HepG2 (cell line): ENCODE measurements at regions of chr12 and their contacts with region 1.

Region 1: GRCh38 chr12:120292661-120293531 is at the start of gene RNU4-1:
- DNase-seq: peak; percentile 93
- ATAC-seq: peak; percentile 45
- H3K4me3 ChIP-seq: peak within 1 kb of the TSS; percentile 59 to 74 (median 71)
- H3K27ac ChIP-seq: peak within 1 kb of the TSS; percentile 100
- H3K4me1 ChIP-seq: peaks cover 26% of the 10 kb centered on the region; the same call in 1 of the 2 replicates
- H3K27me3 ChIP-seq: no peaks in the 10 kb centered on the region; a peak in 1 of 5 replicates
- CTCF ChIP-seq: no peak
- EP300 ChIP-seq: peak in 1 of 2 experiments; percentile 63; a peak in 2 of 4 replicates
- POLR2A ChIP-seq: peak; percentile 99 to 100
- RAD21 ChIP-seq: peak; percentile 22; the same call in 1 of the 2 replicates
- total RNA-seq, gene RNU4-1: 623 and 7,407 TPM in 2 replicates

Region 2: DNA sequence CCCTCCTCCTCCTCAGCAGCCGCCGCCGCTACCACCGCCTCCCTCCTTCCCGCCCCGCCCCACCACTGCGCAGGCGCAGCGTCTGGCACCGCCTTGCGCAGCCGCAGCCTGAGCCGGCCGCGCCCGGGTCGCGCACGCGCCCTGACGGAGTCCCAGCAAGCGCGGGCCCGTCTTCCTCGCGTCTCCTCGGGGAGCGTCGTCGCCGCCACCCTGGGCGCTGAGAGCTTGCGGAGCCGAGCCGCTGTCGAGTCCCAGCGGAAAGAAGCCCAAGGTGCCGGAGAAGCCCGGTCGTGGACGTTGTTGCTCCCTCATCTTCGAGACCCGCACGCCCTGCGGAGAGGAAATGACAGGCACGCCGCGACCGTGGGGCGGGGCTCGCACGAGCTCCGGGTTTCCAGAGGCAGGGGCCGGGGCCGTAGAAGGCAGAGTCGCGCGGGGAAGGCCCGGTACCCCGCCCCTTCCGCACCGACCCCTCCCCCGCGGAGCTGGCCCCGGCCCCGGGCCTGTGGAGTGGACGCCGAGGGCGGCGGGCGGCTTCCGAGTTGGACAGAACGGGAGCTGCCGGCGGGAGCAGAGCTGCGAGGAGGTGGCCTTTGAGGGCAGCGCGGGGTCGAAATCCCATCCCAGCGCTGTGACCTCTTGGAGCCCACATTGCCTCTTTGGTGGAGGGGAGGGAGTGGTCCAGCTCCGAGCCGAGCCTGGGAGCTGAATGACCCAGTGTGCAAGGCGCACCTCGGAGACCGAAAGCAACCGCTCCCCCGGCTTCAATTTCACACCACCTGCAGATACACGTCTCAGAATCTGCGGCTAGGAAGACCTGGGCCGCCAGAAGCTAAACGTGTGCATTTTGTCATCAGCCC is 175.9 kb before region 1 on chr12:
- CTCF ChIA-PET with region 1: no interaction called
- POLR2A ChIA-PET with region 1: interaction called, 26 read pairs
- in situ Hi-C with region 1: no loop called
- intact Hi-C with region 1: no loop called
- DNase-seq: peak; percentile 86
- ATAC-seq: peak; percentile 76
- H3K4me3 ChIP-seq: peak overlapping the region; percentile 70 to 99 (median 93)
- H3K27ac ChIP-seq: peak overlapping the region; percentile 92
- H3K4me1 ChIP-seq: peaks cover 68% of the 10 kb centered on the region
- H3K27me3 ChIP-seq: no peaks in the 10 kb centered on the region; a peak in 1 of 5 replicates
- CTCF ChIP-seq: no peak
- EP300 ChIP-seq: peak in 1 of 2 experiments; percentile 46; a peak in 1 of 4 replicates
- POLR2A ChIP-seq: peak in 1 of 2 experiments; percentile 93; a peak in 2 of 4 replicates
- RAD21 ChIP-seq: no peak; the same call in 1 of the 2 replicates

Region 3: DNA sequence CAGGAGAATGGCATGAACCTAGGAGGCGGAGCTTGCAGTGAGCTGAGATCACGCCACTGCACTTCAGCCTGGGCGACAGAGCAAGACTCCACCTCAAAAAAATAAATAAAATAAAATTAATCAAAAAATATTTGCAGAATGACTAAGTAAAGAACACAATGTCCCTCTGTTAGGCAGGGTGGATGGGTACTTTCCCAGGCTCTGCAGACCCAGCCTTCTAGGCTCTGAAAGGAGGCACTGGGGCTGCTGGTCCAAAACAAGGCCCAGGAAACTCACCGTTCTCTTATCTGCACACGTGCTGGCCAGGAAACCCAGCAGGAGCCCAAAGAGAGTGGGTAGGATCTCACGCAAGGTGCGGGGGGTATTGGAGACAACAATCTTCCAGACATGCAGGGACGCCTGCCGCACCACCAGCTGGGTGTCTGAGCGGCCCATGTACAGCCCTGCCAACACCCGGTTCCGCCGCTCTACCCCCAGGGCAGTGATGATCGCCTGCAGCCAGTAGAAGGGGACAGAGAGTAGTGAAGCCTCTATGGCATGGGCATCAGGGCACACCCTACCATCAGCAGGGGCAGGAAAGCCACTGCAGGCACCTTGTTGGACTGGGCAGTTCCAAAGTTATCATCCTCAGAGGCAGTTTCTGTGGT is 150.5 kb before region 1 on chr12:
- CTCF ChIA-PET with region 1: no interaction called
- POLR2A ChIA-PET with region 1: no interaction called
- in situ Hi-C with region 1: no loop called
- intact Hi-C with region 1: no loop called
- DNase-seq: no peak
- ATAC-seq: no peak
- H3K4me3 ChIP-seq: no peak overlapping the region
- H3K27ac ChIP-seq: no peak overlapping the region
- H3K4me1 ChIP-seq: 0 out of 2 replicates have a peak, but pooled peaks cover 5% of the 10 kb centered on the region
- H3K27me3 ChIP-seq: no peaks in the 10 kb centered on the region
- CTCF ChIP-seq: no peak
- EP300 ChIP-seq: no peak
- POLR2A ChIP-seq: no peak
- RAD21 ChIP-seq: no peak

Region 4: DNA sequence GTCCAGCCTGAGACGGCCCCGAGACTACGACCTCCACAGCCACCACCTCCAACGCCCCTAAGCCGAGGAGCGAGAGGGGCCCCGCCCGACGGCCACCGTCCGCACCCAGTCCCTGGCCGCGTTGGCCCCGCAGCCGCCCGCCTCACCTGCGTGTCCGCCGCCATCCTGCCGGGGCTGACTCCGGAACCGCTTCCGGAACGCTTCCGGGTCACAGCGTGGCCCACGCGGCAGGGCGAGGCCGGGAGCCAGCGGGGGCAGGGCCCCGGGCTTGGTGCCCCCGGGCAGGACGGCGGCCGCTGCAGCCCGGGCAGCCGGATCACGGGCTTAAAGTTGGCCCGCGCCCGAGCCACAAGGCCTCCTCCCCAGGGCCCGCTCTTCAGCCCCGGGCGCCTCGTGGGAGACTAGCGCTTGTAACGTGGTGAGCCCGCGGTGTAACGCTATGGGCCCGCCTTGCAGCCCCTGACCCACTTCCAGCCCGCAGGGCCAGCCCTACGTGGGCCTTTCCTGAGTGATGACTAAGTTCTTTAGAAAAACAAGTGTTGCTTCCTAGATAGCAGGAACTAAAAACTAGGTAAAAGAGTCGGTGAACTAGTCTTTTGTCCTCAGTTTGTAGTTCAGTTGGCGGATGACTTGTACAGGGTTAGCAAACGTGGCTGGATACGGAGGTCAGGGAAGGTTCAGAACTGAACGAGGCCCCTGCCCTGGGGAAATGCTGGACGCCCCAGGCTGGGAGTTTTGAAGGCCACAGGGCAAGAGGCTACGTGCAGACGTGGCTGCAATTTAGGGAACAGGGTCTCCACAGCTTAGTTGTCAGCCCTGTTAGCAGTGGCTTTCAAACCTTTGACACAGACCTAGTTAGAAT is 98.1 kb before region 1 on chr12 and contains the start of gene GCN1:
- CTCF ChIA-PET with region 1: no interaction called
- POLR2A ChIA-PET with region 1: interaction called, 138 read pairs
- in situ Hi-C with region 1: no loop called
- intact Hi-C with region 1: no loop called
- DNase-seq: peak; percentile 78
- ATAC-seq: peak; percentile 84
- H3K4me3 ChIP-seq: peak within 1 kb of the TSS; percentile 80 to 88 (median 82)
- H3K27ac ChIP-seq: peak within 1 kb of the TSS; percentile 94
- H3K4me1 ChIP-seq: peaks cover 70% of the 10 kb centered on the region
- H3K27me3 ChIP-seq: no peaks in the 10 kb centered on the region; a peak in 1 of 5 replicates
- CTCF ChIP-seq: no peak; the same call in 1 of the 2 replicates
- EP300 ChIP-seq: no peak; a peak in 1 of 4 replicates
- POLR2A ChIP-seq: peak; percentile 62 to 92
- RAD21 ChIP-seq: peak; percentile 57
- total RNA-seq, gene GCN1: 66.7 and 83.0 TPM in 2 replicates

Region 5: DNA sequence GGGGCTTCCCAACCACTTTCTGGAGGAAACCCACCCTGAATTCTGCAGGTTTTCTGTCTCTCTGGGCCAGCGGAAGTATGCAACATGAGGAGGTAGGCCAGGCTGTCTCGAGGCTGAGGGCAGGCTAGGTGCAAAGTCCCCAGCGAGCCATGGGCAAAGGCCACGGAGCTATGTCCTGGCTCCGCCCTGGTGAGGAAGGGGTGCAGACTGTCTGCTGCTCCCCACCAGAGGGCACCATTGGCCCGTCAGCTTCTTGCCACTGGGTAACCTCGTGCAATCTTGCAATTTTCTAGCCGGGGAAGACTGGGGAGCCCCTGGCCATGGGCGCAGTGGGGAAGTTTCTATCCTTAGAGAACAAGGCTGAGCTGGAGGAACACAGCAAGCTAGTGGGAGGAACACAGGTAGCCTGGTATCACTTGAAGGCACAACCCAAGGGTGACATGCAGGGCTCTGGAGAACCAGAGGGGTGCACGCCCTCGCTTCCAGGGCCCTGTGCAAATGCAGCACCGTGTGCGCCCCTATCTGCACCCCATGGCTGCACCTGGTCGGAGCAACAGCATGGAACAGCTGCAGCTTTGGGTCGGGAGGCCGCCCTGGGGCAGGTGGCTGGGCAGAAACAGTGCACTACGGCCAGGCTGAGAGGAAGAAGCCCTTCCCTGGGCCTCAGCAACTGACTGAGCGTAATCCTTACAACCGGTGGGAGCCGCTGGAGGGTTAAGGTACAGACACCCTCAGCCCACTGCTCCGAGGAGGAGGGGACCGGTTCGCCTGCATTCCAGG is 64.4 kb before region 1 on chr12:
- CTCF ChIA-PET with region 1: no interaction called
- POLR2A ChIA-PET with region 1: interaction called, 461 read pairs
- in situ Hi-C with region 1: no loop called
- intact Hi-C with region 1: loop called (anchors 1 kb)
- DNase-seq: peak; percentile 91
- ATAC-seq: peak; percentile 81
- H3K4me3 ChIP-seq: peak overlapping the region; percentile 50 to 70 (median 58)
- H3K27ac ChIP-seq: peak overlapping the region; percentile 100
- H3K4me1 ChIP-seq: peaks cover 92% of the 10 kb centered on the region
- H3K27me3 ChIP-seq: no peaks in the 10 kb centered on the region
- CTCF ChIP-seq: peak; percentile 98
- EP300 ChIP-seq: peak; percentile 40 to 58; a peak in 2 of 4 replicates
- POLR2A ChIP-seq: peak; percentile 38 to 64
- RAD21 ChIP-seq: peak; percentile 96

Region 6: DNA sequence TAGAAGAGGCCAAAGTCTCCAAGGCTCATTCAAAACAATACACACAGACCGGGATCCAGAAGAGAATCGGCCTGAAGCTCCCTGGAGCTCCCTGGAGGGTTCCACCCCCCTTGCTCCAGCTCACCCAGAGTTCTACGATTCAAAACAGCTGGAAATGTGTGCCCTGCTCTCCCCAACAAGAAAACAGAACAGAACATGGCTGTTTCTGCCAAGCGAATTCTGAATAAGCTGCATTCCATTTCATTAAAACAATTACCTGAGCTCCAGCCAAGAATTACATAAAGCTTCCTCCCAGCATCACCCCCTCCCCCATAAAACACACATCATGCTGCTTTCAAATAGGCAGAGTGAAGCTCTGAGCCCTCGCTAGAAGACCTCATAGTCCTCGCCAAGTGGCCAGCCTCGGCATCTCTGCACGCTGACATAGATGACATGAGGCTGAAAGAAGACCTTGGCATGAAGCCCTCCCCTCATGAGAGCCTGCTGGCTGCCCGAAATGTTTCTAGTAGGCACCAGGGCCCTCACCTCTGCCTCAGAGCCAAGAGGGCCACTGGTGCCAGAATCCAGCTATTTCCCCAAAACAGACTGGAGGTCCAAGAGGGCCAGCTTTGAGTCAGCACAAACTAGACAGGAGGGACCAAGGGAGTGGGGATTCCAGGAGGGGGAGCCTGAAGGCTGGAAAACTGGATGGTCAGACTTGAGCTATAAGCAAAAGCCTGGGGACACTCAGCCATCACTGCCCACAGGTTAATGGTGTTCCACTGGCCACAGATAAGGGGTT is 35.7 kb before region 1 on chr12:
- CTCF ChIA-PET with region 1: no interaction called
- POLR2A ChIA-PET with region 1: interaction called, 124 read pairs
- in situ Hi-C with region 1: no loop called
- intact Hi-C with region 1: no loop called
- DNase-seq: no peak
- ATAC-seq: peak; percentile 40
- H3K4me3 ChIP-seq: no peak overlapping the region
- H3K27ac ChIP-seq: no peak overlapping the region
- H3K4me1 ChIP-seq: peaks cover 57% of the 10 kb centered on the region
- H3K27me3 ChIP-seq: no peaks in the 10 kb centered on the region
- CTCF ChIP-seq: no peak
- EP300 ChIP-seq: no peak
- POLR2A ChIP-seq: no peak
- RAD21 ChIP-seq: no peak

Region 7: GRCh38 chr12:120276734-120277133 is 16.2 kb before region 1 on chr12:
- CTCF ChIA-PET with region 1: no interaction called
- POLR2A ChIA-PET with region 1: interaction called, 34 read pairs
- in situ Hi-C with region 1: no loop called
- intact Hi-C with region 1: no loop called
- DNase-seq: peak; percentile 23
- ATAC-seq: peak; percentile 31
- H3K4me3 ChIP-seq: peak overlapping the region in 2 of 3 experiments; percentile 16 to 37; a peak in 2 of 6 replicates
- H3K27ac ChIP-seq: no peak overlapping the region
- H3K4me1 ChIP-seq: peaks cover 10% of the 10 kb centered on the region
- H3K27me3 ChIP-seq: no peaks in the 10 kb centered on the region
- CTCF ChIP-seq: no peak
- EP300 ChIP-seq: no peak
- POLR2A ChIP-seq: no peak
- RAD21 ChIP-seq: no peak

Region 8: DNA sequence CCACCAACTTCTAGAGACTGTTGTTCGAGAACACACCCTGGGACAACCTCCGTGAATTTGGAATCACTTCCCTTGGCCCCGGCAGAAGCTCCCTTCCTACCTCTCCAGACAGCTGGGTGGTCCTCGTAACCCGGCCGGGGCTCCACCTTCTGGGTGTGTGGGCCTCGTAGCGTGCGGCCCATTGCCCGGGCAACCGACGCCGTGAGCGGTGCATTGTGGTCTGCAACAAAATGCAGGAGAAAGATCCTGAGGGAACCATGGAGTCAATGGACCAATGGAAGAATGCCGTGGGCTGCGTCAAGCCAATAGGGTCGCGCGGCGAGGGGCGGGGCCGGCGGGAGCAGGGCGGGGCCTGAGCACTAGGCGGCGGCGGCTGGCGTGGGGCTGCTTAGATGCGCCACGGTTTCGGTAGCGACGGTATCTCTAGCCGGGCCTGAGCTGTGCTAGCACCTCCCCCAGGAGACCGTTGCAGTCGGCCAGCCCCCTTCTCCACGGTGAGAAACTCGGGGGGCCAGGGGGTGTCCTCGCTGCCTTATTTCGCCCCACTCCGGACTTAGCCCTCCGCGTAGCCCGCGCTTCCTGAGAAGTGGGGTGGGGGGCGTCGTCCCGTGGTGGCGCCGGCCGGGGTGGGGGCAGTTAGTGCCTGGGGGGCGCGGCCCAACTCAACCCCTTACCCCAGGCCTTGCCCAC is 203.0 kb after region 1 on chr12 and contains the start of gene DYNLL1:
- CTCF ChIA-PET with region 1: no interaction called
- POLR2A ChIA-PET with region 1: interaction called, 12 read pairs
- in situ Hi-C with region 1: no loop called
- intact Hi-C with region 1: no loop called
- DNase-seq: peak; percentile 93
- ATAC-seq: peak; percentile 94
- H3K4me3 ChIP-seq: peak within 1 kb of the TSS; percentile 95 to 100 (median 97)
- H3K27ac ChIP-seq: peak within 1 kb of the TSS; percentile 69
- H3K4me1 ChIP-seq: peaks cover 28% of the 10 kb centered on the region
- H3K27me3 ChIP-seq: no peaks in the 10 kb centered on the region; a peak in 1 of 5 replicates
- CTCF ChIP-seq: no peak; the same call in 1 of the 2 replicates
- EP300 ChIP-seq: peak in 1 of 2 experiments; percentile 55; a peak in 3 of 4 replicates
- POLR2A ChIP-seq: peak; percentile 95 to 100
- RAD21 ChIP-seq: peak; percentile 6; the same call in 1 of the 2 replicates
- total RNA-seq, gene DYNLL1: 271 and 403 TPM in 2 replicates